ENCODE measurements at regions of chr15 and their contacts with region 1.

Region 1: GRCh38 chr15:34969340-34970097 is at the start of gene AQR:
- DNase-seq: peak; percentile 98
- H3K4me3 ChIP-seq: peak within 1 kb of the TSS; percentile 94
- H3K27ac ChIP-seq: peak within 1 kb of the TSS; percentile 69
- H3K27me3 ChIP-seq: no peaks in the 10 kb centered on the region
- CTCF ChIP-seq: peak; percentile 96
- polyA plus RNA-seq, gene AQR: 25.2 and 32.9 TPM in 2 replicates

Region 2: DNA sequence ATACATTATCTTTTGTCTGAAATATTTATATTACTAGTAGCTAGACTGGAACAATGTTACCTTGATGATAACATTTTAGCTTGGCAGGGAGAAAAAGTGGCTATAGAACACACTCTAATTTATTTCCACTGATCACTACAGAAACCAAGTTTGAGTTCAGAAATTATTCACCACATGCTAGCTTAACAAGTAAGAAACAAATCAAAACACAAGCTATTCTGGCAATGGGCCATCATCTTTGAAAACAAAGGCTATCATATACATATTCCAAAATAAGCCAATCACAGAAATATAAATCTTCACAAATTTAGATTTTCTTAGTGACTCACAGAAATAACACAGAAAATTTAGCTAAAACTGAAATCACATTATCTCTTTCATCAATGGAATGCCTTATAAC is 17.0 kb before region 1 on chr15:
- CTCF ChIA-PET with region 1: interaction called, 16 read pairs
- POLR2A ChIA-PET with region 1: interaction called, 4 read pairs
- DNase-seq: no peak
- H3K4me3 ChIP-seq: no peak overlapping the region
- H3K27ac ChIP-seq: no peak overlapping the region
- H3K27me3 ChIP-seq: no peaks in the 10 kb centered on the region
- CTCF ChIP-seq: no peak

Region 3: GRCh38 chr15:34987985-34988873 is 18.7 kb after region 1 on chr15 and contains the start of gene ZNF770:
- CTCF ChIA-PET with region 1: interaction called, 20 read pairs
- POLR2A ChIA-PET with region 1: interaction called, 34 read pairs
- DNase-seq: peak; percentile 26
- H3K4me3 ChIP-seq: peak within 1 kb of the TSS; percentile 93
- H3K27ac ChIP-seq: peak within 1 kb of the TSS; percentile 91
- H3K27me3 ChIP-seq: no peaks in the 10 kb centered on the region
- CTCF ChIP-seq: no peak
- polyA plus RNA-seq, gene ZNF770: 20.2 and 26.9 TPM in 2 replicates